A549 (cell line): ENCODE measurements at regions of chr1 and their contacts with region 1.

Region 1: DNA sequence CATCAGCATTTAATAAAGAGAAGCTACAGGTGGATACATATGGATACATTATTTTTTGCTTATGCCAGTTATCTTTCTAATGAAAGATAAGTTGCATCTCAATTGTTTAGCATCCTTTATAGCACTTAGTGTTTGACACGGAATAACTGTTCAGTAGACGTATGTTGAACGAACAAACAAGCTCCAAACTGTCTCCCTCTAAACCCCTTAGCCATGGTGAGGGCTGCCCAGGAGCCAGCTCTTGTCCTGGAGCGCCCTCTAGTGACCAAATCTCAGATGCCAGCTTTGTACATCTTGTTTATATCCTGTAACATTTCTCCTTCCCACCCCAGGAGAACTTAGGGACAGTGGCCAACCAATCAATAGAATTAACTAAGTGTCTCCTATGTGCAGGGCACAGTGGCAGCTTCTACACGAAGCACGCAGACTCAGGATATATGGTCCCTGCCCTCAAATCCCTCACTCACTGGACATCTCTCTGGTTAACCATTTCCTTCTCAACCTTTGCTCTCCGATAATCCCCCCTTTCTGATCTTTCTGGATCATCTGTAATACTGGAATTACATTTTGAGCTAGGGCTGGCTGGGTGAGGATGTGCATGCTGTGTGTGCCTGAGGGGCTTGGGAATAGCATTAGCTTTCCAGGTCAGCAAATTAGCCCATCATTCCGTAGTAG is 22.9 kb downstream of the KCNA10 start:
- DNase-seq: peak; percentile 66 to 72
- ATAC-seq: peak; percentile 87 to 97
- H3K4me3 ChIP-seq: no peak overlapping the region
- H3K27ac ChIP-seq: no peak overlapping the region
- H3K4me1 ChIP-seq: no peaks in the 10 kb centered on the region
- CTCF ChIP-seq: peak; percentile 89
- EP300 ChIP-seq: no peak
- POLR2A ChIP-seq: no peak
- RAD21 ChIP-seq: peak; percentile 91 to 97

Region 2: DNA sequence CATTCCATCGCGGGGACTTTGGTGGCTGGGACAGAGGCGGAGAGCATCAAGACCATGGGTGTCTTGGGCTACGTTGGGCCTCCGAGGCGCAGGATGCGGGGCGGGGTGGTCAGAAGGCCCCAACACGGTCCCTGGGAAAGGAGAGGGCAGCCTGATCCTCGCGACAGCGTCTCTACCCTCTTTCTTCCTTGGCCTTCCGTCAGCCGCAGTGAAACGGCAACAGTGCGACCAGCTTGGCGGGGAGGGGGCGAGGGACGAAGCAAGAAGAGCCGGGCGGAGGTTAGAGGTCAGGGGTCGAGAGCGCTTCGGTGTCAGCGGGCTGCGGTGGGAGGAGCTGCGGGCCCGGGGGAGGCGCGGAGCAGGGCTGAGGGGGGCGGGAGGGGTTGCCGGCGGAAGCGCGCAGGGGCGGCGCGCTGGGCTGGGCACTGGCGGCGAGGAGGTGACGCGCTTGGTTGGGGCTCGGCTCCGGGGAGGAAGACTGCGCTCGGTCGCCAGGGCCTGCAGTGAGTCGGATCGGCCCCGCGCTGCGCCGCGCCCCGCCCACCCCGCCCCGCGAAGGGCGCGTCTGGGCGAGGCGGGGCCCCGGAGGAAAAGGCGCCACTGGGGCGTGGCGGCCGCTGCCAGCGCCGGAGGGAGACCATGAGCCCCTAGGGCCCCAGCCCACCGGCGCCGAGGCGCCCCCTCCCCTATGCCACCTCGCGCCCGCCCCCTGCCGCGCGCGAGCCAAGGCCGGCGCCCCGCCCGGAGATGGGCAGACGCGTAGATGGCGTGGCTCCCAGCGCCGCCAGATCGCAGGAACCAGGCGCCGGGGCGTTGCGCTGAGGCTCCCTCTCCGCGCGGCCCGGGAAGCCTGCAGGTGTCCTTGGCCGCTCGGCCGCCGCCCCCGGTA is 286.1 kb before region 1 on chr1 and contains the start of gene KCNC4:
- CTCF ChIA-PET with region 1: interaction called, 165 read pairs
- POLR2A ChIA-PET with region 1: no interaction called
- DNase-seq: peak; percentile 58 to 81
- ATAC-seq: peak; percentile 84 to 91
- H3K4me3 ChIP-seq: peak within 1 kb of the TSS; percentile 77
- H3K27ac ChIP-seq: peak within 1 kb of the TSS; percentile 83 to 94
- H3K4me1 ChIP-seq: peaks cover 4% of the 10 kb centered on the region; the same call in 2 of the 3 replicates
- CTCF ChIP-seq: no peak
- EP300 ChIP-seq: no peak
- POLR2A ChIP-seq: no peak
- RAD21 ChIP-seq: no peak
- polyA plus RNA-seq, gene KCNC4: 1.1 and 1.8 TPM in 2 replicates

Region 3: GRCh38 chr1:110407260-110408210 is 88.5 kb before region 1 on chr1 and contains the start of gene LAMTOR5:
- CTCF ChIA-PET with region 1: interaction called, 146 read pairs
- POLR2A ChIA-PET with region 1: interaction called, 9 read pairs
- DNase-seq: peak; percentile 61 to 94
- ATAC-seq: peak; percentile 95 to 96
- H3K4me3 ChIP-seq: peak within 1 kb of the TSS; percentile 98
- H3K27ac ChIP-seq: peak within 1 kb of the TSS; percentile 98 to 99
- H3K4me1 ChIP-seq: peaks cover 14% of the 10 kb centered on the region
- CTCF ChIP-seq: no peak
- EP300 ChIP-seq: no peak
- POLR2A ChIP-seq: peak; percentile 69
- RAD21 ChIP-seq: peak; percentile 31 to 49; a peak in 3 of 5 replicates
- polyA plus RNA-seq, gene LAMTOR5: 256 and 314 TPM in 2 replicates

Region 4: GRCh38 chr1:110440877-110441276 is 55.2 kb before region 1 on chr1:
- CTCF ChIA-PET with region 1: interaction called, 17 read pairs
- POLR2A ChIA-PET with region 1: no interaction called
- DNase-seq: no peak
- ATAC-seq: no peak
- H3K4me3 ChIP-seq: no peak overlapping the region
- H3K27ac ChIP-seq: no peak overlapping the region; a peak in 2 of 6 replicates
- H3K4me1 ChIP-seq: no peaks in the 10 kb centered on the region
- CTCF ChIP-seq: no peak
- EP300 ChIP-seq: no peak
- POLR2A ChIP-seq: no peak
- RAD21 ChIP-seq: no peak

Region 5: GRCh38 chr1:110471163-110471562 is 24.9 kb before region 1 on chr1:
- CTCF ChIA-PET with region 1: interaction called, 256 read pairs
- POLR2A ChIA-PET with region 1: no interaction called
- DNase-seq: peak in 1 of 2 experiments; percentile 21
- ATAC-seq: peak; percentile 52 to 53; a peak in 3 of 6 replicates
- H3K4me3 ChIP-seq: no peak overlapping the region
- H3K27ac ChIP-seq: no peak overlapping the region
- H3K4me1 ChIP-seq: peaks cover 7% of the 10 kb centered on the region
- CTCF ChIP-seq: 0 out of 3 replicates have a peak, but pooled peaks have one; percentile 16
- EP300 ChIP-seq: no peak
- POLR2A ChIP-seq: no peak
- RAD21 ChIP-seq: no peak

Region 6: GRCh38 chr1:110508038-110508940 is 12.2 kb after region 1 on chr1:
- CTCF ChIA-PET with region 1: interaction called, 22 read pairs
- POLR2A ChIA-PET with region 1: no interaction called
- DNase-seq: no peak
- ATAC-seq: no peak
- H3K4me3 ChIP-seq: no peak overlapping the region
- H3K27ac ChIP-seq: no peak overlapping the region
- H3K4me1 ChIP-seq: no peaks in the 10 kb centered on the region
- CTCF ChIP-seq: no peak
- EP300 ChIP-seq: no peak
- POLR2A ChIP-seq: no peak
- RAD21 ChIP-seq: no peak